IMR-90 (cell line): ENCODE measurements at regions of chr10 and their contacts with region 1.

Region 1: DNA sequence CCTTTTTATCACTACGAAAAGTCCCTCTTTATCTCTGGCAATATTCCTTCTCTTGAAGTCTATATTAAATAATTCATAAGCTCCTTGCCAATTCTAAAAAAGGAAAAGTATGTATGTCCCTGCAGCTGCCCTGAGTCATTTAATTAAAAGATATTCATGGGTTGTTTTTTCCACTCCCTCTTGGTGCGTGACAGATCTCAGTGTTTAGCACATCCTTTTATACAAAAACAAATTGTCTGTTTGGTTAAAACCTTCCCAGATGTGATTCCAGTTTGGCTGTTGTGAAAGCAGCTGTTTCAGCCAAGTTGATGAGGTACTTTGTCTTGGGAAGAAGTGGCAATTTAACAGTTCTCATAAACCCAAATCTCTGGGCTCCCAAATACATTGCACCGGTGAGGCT is 33.8 kb upstream of the PRLHR start:
- DNase-seq: no peak
- ATAC-seq: no peak
- H3K4me3 ChIP-seq: no peak overlapping the region
- H3K27ac ChIP-seq: no peak overlapping the region
- H3K4me1 ChIP-seq: no peaks in the 10 kb centered on the region
- H3K27me3 ChIP-seq: 0 out of 2 replicates have a peak, but pooled peaks cover 1% of the 10 kb centered on the region
- CTCF ChIP-seq: no peak
- POLR2A ChIP-seq: no peak
- RAD21 ChIP-seq: no peak

Region 2: DNA sequence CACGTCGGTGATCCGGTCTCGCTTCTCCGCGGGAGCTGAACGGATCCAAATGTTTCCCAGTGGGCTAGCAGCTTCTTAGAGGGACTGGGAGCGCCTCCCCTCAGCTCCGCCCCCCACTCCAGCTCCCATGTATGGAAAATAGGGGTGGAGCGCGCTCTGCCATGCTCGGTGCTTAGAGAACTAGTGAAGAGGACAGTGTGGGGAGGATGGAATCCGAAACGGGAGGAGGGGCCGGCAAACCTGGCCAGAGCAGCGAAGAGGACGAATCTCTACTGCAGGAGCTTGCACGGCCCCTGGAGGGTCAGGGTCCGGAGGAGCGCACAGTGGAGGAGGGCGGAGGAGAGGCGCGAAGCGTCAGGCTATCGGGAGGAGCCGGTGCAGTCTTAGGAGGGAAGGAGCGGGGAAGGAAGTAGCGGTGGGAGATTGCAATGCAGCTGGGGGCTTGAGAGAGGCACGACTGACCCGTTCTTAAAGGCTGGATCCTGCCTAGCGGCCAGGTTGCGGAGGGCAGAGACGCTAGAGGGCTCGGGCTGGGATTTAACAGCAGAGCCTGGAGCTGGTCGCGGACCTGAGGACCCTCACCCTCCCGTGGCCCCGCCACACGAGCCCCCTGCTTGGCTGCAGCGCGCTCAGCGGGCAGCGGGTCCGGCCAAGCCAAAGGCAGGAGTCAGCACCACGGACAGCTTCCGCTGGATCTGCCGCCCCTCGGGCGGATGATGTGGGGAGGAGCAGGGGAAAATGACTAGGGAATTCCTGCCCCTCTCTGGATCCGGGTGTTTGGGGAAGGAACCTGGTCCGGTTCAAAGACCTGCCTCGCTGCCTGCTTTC is 33.4 kb before region 1 on chr10 and contains the start of gene PRLHR:
- CTCF ChIA-PET with region 1: no interaction called
- POLR2A ChIA-PET with region 1: no interaction called
- dilution Hi-C with region 1: no loop called
- in situ Hi-C with region 1: no loop called
- intact Hi-C with region 1: loop called (anchors 2 kb)
- DNase-seq: peak; percentile 10
- ATAC-seq: peak; percentile 80
- H3K4me3 ChIP-seq: no peak within 1 kb of the TSS
- H3K27ac ChIP-seq: no peak within 1 kb of the TSS
- H3K4me1 ChIP-seq: no peaks in the 10 kb centered on the region
- H3K27me3 ChIP-seq: peaks cover 18% of the 10 kb centered on the region
- CTCF ChIP-seq: no peak
- POLR2A ChIP-seq: no peak
- RAD21 ChIP-seq: no peak
- total RNA-seq, gene PRLHR: not detected in 2 replicates